ENCODE measurements at regions of chrX and their contacts with region 1.

Region 1: DNA sequence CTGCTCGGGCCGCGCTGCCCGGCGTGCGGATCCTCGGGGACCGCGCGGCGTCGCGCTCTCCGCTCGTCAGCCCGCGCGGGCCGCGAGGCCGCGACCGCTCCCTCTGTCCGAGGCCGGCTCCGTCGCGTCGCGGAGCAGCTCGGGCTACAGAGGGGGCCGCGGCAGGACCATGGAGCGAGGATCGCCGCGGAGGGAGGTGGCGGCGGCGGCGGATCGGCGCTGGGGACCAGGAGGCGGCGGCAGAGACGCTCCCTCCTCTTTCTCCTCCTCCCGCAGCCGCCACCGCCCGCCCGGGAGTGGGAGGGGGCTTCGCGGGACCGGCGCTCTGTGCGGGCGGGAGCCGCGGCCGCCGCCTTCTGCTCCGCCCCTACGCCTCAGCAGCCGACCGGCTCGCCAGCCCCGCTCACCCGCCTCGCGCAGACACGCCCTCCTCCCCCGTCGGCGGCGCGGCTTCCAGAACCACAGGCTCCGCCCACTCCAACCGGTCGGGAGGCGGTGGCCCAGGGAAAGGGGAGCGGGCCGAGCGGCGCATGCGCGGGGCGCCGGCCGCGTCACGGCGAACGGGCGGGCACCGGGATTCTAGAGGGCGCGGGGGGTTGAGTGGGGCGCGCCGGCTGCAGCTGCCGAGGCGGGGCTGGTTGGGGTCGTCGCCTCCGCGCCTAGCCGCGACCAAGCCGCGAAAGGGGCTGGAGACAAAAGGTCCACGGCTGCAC is at the start of gene CASK:
- DNase-seq: peak; percentile 51
- ATAC-seq: peak; percentile 81
- H3K4me3 ChIP-seq: peak within 1 kb of the TSS; percentile 71
- H3K27ac ChIP-seq: peak within 1 kb of the TSS; percentile 38
- H3K4me1 ChIP-seq: no peaks in the 10 kb centered on the region
- H3K27me3 ChIP-seq: no peaks in the 10 kb centered on the region; a peak in 1 of 4 replicates
- CTCF ChIP-seq: 0 out of 6 replicates have a peak, but pooled peaks of 1 of the 3 experiments have one; percentile 4
- EP300 ChIP-seq: no peak
- POLR2A ChIP-seq: no peak
- RAD21 ChIP-seq: no peak
- polyA plus RNA-seq, gene CASK: 2.6 to 3.1 TPM

Region 2: GRCh38 chrX:41837270-41837944 is 86.0 kb before region 1 on chrX:
- CTCF ChIA-PET with region 1: interaction called, 3 read pairs
- POLR2A ChIA-PET with region 1: no interaction called
- RAD21 ChIA-PET with region 1: interaction called, 3 read pairs
- SMC1A ChIA-PET with region 1: interaction called, 8 read pairs
- in situ Hi-C with region 1: no loop called
- intact Hi-C with region 1: loop called (anchors 2 kb)
- DNase-seq: no peak
- ATAC-seq: peak; percentile 93
- H3K4me3 ChIP-seq: no peak overlapping the region
- H3K27ac ChIP-seq: no peak overlapping the region
- H3K4me1 ChIP-seq: no peaks in the 10 kb centered on the region
- H3K27me3 ChIP-seq: no peaks in the 10 kb centered on the region
- CTCF ChIP-seq: no peak
- EP300 ChIP-seq: peak; percentile 8 to 61; a peak in 1 of 4 replicates
- POLR2A ChIP-seq: no peak
- RAD21 ChIP-seq: no peak

Region 3: GRCh38 chrX:41868392-41868977 is 54.9 kb before region 1 on chrX:
- CTCF ChIA-PET with region 1: no interaction called
- POLR2A ChIA-PET with region 1: interaction called, 5 read pairs
- RAD21 ChIA-PET with region 1: interaction called, 4 read pairs
- SMC1A ChIA-PET with region 1: interaction called, 15 read pairs
- in situ Hi-C with region 1: no loop called
- intact Hi-C with region 1: no loop called
- DNase-seq: no peak
- ATAC-seq: peak; percentile 66
- H3K4me3 ChIP-seq: no peak overlapping the region
- H3K27ac ChIP-seq: no peak overlapping the region
- H3K4me1 ChIP-seq: peaks cover 3% of the 10 kb centered on the region; the same call in 1 of the 2 replicates
- H3K27me3 ChIP-seq: no peaks in the 10 kb centered on the region
- CTCF ChIP-seq: no peak
- EP300 ChIP-seq: no peak
- POLR2A ChIP-seq: no peak
- RAD21 ChIP-seq: no peak

Region 4: GRCh38 chrX:42093756-42094155 is 170.3 kb after region 1 on chrX:
- CTCF ChIA-PET with region 1: no interaction called
- POLR2A ChIA-PET with region 1: interaction called, 5 read pairs
- RAD21 ChIA-PET with region 1: interaction called, 4 read pairs
- SMC1A ChIA-PET with region 1: no interaction called
- in situ Hi-C with region 1: no loop called
- intact Hi-C with region 1: loop called (anchors 5 kb)
- DNase-seq: peak; percentile 43
- ATAC-seq: peak; percentile 92
- H3K4me3 ChIP-seq: no peak overlapping the region
- H3K27ac ChIP-seq: no peak overlapping the region
- H3K4me1 ChIP-seq: no peaks in the 10 kb centered on the region
- H3K27me3 ChIP-seq: no peaks in the 10 kb centered on the region
- CTCF ChIP-seq: no peak
- EP300 ChIP-seq: no peak
- POLR2A ChIP-seq: no peak
- RAD21 ChIP-seq: no peak

Region 5: GRCh38 chrX:42107495-42108488 is 184.4 kb after region 1 on chrX:
- CTCF ChIA-PET with region 1: interaction called, 3 read pairs
- POLR2A ChIA-PET with region 1: no interaction called
- RAD21 ChIA-PET with region 1: no interaction called
- SMC1A ChIA-PET with region 1: no interaction called
- in situ Hi-C with region 1: no loop called
- intact Hi-C with region 1: loop called (anchors 5 kb)
- DNase-seq: no peak
- ATAC-seq: peak; percentile 89
- H3K4me3 ChIP-seq: no peak overlapping the region
- H3K27ac ChIP-seq: no peak overlapping the region
- H3K4me1 ChIP-seq: no peaks in the 10 kb centered on the region; the same call in 1 of the 2 replicates
- H3K27me3 ChIP-seq: no peaks in the 10 kb centered on the region
- CTCF ChIP-seq: no peak
- EP300 ChIP-seq: 0 out of 4 replicates have a peak, but pooled peaks of 1 of the 2 experiments have one; percentile 26
- POLR2A ChIP-seq: no peak
- RAD21 ChIP-seq: no peak

Region 6: DNA sequence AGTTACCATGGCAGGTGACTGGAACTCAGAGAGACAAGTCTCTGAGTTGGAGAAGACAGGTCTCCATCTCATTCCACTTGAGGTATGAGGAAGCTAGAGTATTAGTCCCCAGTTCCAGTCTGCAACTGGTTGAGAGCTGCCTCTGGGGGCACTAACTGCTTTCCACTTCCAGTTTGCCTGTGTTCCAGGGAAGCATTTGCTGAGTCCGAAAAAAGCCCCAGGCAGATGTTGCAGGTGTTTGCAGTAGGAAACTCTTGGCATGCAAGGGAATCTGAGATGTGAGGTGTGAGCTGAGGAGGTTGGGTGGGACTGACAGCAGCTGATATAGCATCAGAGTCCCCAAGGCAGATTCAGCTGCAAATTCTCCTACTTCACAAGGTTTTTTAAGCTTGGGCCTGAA is 272.1 kb after region 1 on chrX:
- CTCF ChIA-PET with region 1: no interaction called
- POLR2A ChIA-PET with region 1: no interaction called
- RAD21 ChIA-PET with region 1: no interaction called
- SMC1A ChIA-PET with region 1: no interaction called
- in situ Hi-C with region 1: no loop called
- intact Hi-C with region 1: no loop called
- DNase-seq: no peak
- ATAC-seq: no peak
- H3K4me3 ChIP-seq: no peak overlapping the region
- H3K27ac ChIP-seq: no peak overlapping the region
- H3K4me1 ChIP-seq: no peaks in the 10 kb centered on the region
- H3K27me3 ChIP-seq: no peaks in the 10 kb centered on the region
- CTCF ChIP-seq: no peak
- EP300 ChIP-seq: no peak
- POLR2A ChIP-seq: no peak
- RAD21 ChIP-seq: no peak

Measured in GM12878 (cell line).